ENCODE measurements at regions of chr7 and their contacts with region 1.

Region 1: DNA sequence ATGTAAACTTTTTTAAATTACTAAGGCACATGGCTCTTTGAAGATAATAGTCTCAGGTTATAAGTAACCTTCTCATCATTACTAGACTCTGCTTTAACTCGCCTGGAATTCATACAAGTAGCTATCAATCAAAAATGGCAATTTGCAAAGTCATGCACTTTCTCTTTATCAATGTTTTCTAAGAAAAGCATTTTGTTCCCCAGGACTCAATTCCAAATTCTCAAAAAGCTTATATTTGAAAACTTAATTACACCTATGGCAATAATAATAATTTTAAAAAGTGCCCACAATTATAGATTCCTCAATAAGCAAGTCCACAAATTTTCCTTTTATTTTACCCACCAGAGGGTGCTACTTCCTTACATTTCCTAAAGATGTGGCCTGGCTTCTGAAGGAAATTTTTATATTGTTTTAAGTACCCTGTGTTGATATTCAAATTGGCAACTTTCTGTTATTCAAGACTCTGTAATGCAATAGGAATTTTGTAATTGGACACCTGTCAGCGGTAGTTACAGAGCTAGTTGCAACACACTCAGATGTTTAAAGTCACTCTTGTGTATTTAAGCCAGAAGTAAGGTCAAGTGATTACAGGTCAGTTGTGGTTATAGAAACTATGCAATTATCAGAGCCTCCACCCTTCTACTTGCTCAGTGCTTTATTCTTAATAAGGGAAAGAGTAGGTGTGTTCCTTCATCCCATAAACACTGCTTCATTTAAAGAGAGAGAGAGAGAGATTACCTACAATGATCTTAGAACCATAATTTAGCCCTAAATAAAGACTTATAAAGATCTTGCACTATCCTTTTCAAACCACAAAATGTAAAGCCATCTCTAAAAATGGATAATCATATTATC is 47.1 kb upstream of the HYAL4 start:
- DNase-seq: no peak
- ATAC-seq: no peak
- H3K4me3 Mint-ChIP-seq: no peak overlapping the region
- H3K27ac Mint-ChIP-seq: no peak overlapping the region
- H3K4me1 Mint-ChIP-seq: no peaks in the 10 kb centered on the region
- H3K27me3 Mint-ChIP-seq: no peaks in the 10 kb centered on the region

Region 2: GRCh38 chr7:123865517-123866117 is 67.7 kb after region 1 on chr7:
- CTCF ChIA-PET with region 1: interaction called, 51 read pairs
- POLR2A ChIA-PET with region 1: no interaction called
- DNase-seq: peak; percentile 63
- ATAC-seq: peak; percentile 79
- H3K4me3 Mint-ChIP-seq: no peak overlapping the region
- H3K27ac Mint-ChIP-seq: no peak overlapping the region
- H3K4me1 Mint-ChIP-seq: no peaks in the 10 kb centered on the region
- H3K27me3 Mint-ChIP-seq: no peaks in the 10 kb centered on the region

Region 3: GRCh38 chr7:123871998-123872867 is 74.3 kb after region 1 on chr7:
- CTCF ChIA-PET with region 1: interaction called, 51 read pairs
- POLR2A ChIA-PET with region 1: no interaction called
- DNase-seq: peak; percentile 50
- ATAC-seq: peak; percentile 84
- H3K4me3 Mint-ChIP-seq: no peak overlapping the region
- H3K27ac Mint-ChIP-seq: no peak overlapping the region
- H3K4me1 Mint-ChIP-seq: no peaks in the 10 kb centered on the region
- H3K27me3 Mint-ChIP-seq: peaks cover 4% of the 10 kb centered on the region

Measured in activated CD8-positive, alpha-beta T cell treated with anti-CD3 and anti-CD28 coated beads, Interleukin-2, amount 10 ng/mL, durations not matched to agents 7 days and 5 days (primary cell).